Activated CD4-positive, alpha-beta memory T cell treated with anti-CD3 and anti-CD28 coated beads, Interleukin-2, amount 10 ng/mL, durations not matched to agents 7 days and 5 days (primary cell): ENCODE measurements at regions of chr2 and their contacts with region 1.

Region 1: DNA sequence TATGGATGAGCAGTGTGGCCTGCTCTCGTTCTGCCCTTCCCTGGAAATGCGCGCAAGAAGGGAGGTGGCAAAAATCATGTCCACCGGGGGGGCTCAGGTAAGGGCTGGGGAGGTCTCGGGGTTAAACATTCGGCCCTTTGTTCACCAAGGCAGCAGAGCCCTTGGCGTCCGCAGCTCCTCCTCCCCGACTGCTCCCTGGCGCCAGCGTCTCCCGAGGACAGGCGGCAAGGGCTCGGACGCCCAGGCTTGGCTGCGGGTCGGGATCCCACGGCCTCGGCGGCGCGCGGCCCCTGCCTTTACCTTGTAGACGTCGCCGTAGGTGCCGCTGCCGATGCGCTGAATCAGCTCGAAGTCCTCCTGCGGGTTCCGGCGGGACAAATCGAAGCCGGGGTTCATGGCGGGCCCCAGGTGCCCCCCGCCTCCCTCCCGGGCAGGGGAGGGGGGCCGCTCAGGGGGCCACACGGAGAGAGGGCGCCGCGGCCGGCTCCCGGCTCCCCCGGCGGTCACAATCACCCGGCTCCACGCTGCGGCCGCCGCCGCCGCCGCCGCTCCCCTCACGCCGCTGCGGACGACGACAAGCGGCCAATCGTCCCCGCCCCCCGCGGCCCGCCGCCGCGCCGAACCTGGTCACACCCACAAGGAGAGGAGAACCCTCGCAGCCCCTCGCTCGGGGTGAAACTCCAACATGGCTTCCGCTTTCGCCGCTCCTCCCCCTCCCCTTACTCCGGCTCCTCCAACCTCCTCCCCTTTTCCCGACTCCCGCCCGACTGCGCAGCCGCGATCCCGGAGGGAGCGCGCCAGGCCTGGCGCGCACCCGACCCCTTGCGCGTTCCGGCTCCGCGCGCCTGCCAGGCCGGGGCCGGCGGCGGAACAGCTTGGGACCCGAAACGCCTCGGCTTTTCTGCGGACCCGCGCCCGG is at the start of gene MAP4K3:
- DNase-seq: peak; percentile 77
- H3K4me3 Mint-ChIP-seq: peak within 1 kb of the TSS; percentile 80
- H3K27ac Mint-ChIP-seq: peak within 1 kb of the TSS; percentile 69
- H3K4me1 Mint-ChIP-seq: peaks cover 36% of the 10 kb centered on the region
- H3K27me3 Mint-ChIP-seq: no peaks in the 10 kb centered on the region
- total RNA-seq, gene MAP4K3: 8.6 to 12.3 TPM

Region 2: DNA sequence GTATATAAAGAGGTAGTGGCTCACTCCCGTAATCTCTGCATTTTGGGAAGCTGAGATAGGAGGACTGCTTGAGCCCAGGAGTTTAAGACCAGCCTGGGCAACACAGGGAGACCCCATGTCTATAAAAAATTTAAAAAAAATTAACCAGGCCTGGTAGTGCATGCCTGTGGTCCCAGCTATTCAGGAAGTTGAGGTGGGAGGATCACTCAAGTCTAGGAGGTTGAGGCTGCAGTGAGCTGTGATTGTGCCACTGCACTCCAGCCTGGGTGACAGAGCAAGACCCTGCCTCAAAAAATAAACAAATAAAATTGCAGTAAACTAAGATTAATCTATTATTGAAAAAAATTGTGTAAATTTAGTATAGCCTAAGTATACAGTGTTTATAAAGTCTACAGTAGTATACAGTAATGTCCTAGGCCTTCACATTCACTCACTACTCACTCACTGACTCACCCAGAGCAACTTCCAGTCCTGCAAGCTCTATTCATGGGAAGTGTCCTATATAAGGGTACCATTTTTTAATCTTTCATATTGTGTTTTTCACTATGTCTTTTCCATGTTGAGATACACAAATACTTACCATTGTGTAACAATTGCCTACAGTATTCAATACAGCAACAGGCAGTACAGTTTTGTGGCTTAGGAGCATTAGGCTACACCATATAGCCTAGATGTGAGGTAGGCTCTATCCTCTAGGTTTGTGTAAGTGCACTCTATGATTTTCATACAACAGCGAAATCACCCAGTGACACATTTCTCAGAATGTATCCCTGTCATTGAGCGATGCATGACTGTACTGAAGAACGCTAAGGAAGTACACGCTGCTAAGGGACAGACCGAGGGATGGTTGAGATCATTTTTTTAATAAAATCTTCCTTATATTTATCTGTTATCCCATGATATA is 10.7 kb after region 1 on chr2:
- CTCF ChIA-PET with region 1: no interaction called
- POLR2A ChIA-PET with region 1: no interaction called
- DNase-seq: no peak
- H3K4me3 Mint-ChIP-seq: no peak overlapping the region
- H3K27ac Mint-ChIP-seq: no peak overlapping the region
- H3K4me1 Mint-ChIP-seq: no peaks in the 10 kb centered on the region
- H3K27me3 Mint-ChIP-seq: no peaks in the 10 kb centered on the region

Region 3: DNA sequence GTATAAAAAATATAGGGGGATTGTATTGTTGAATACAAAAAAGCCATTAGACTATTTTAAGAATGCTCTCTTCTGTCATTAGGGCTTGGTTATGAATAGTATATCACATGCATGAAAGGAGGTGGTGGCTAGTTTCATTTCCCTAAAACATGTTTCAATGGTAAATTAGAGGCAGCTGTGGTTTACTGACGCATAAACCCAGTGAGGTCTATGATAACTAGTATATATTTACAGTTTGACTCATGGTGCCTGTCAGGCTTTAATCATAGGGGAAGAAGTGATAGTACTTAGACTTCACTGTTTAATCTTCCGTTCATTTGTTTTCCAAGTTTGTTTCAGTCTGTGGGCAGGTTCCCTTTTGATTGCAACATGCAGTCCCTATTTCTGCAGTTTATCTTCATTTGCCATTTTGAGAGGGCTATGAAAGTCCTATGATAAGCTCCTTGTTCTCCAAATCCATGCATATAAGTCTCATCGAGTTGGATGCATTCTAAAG is 55.3 kb after region 1 on chr2:
- CTCF ChIA-PET with region 1: interaction called, 3 read pairs
- POLR2A ChIA-PET with region 1: interaction called, 12 read pairs
- DNase-seq: peak; percentile 41
- H3K4me3 Mint-ChIP-seq: no peak overlapping the region
- H3K27ac Mint-ChIP-seq: peak overlapping the region; percentile 30
- H3K4me1 Mint-ChIP-seq: peaks cover 46% of the 10 kb centered on the region
- H3K27me3 Mint-ChIP-seq: peaks cover 22% of the 10 kb centered on the region